Sigmoid colon (tissue), 7 donors: ENCODE measurements at regions of chr20 and their contacts with region 1.

Region 1: GRCh38 chr20:33460711-33461110 is 17.1 kb upstream of the SNTA1 start:
- DNase-seq: no peak
- H3K4me3 ChIP-seq: no peak overlapping the region
- H3K27ac ChIP-seq: no peak overlapping the region
- H3K4me1 ChIP-seq: peaks cover 0 to 2% (median 0%) of the 10 kb centered on the region in 4 donors
- H3K27me3 ChIP-seq: no peaks in the 10 kb centered on the region
- CTCF ChIP-seq: no peak
- EP300 ChIP-seq: no peak
- POLR2A ChIP-seq: no peak

Region 2: GRCh38 chr20:33031531-33031930 is 429.2 kb before region 1 on chr20 and contains the start of gene BPIFB6:
- intact Hi-C with region 1: no loop called
- DNase-seq: no peak
- H3K4me3 ChIP-seq: no peak within 1 kb of the TSS
- H3K27ac ChIP-seq: no peak within 1 kb of the TSS
- H3K4me1 ChIP-seq: no peaks in the 10 kb centered on the region
- H3K27me3 ChIP-seq: no peaks in the 10 kb centered on the region
- CTCF ChIP-seq: no peak
- EP300 ChIP-seq: no peak
- POLR2A ChIP-seq: no peak
- total RNA-seq, gene BPIFB6: not detected

Region 3: DNA sequence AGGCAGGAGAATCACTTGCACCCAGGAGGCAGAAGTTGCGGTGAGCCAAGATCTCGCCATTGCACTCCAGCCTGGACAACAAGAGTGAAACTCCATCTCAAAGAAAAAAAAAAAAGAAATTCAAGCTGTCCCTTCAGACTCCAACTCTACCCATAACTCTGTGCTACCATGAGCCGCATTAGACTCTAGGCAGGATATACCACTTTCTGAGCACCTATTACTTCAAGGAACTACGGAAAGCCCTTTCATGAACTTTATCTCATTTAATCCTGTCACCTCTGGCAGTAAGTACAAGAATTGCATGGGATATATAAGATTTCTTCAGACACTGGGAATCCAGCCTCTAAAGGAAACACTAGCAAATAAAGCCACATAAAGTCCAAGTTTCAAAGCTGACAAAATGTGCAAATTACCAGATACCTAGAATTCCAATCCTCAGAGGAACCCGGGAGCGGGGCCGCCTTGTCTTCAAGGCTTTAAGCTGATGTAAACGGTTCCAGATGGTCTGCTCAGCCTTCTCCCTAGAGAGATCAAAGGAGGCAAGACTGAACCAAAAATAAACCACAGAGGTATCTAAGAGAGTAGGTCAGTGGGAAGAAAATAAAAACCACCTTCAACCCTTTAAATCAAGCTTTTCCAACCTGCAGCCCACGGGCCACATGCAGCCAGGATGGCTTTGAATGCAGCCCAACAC is 68.8 kb before region 1 on chr20:
- intact Hi-C with region 1: no loop called
- DNase-seq: no peak
- H3K4me3 ChIP-seq: no peak overlapping the region
- H3K27ac ChIP-seq: no peak overlapping the region
- H3K4me1 ChIP-seq: no peaks in the 10 kb centered on the region
- H3K27me3 ChIP-seq: no peaks in the 10 kb centered on the region
- CTCF ChIP-seq: no peak
- EP300 ChIP-seq: no peak
- POLR2A ChIP-seq: no peak

Region 4: GRCh38 chr20:33539129-33539528 is 78.4 kb after region 1 on chr20:
- intact Hi-C with region 1: no loop called
- DNase-seq: no peak
- H3K4me3 ChIP-seq: no peak overlapping the region
- H3K27ac ChIP-seq: peak overlapping the region in 2 of 4 donors; percentile 0 to 78
- H3K4me1 ChIP-seq: peaks cover 0 to 45% (median 14%) of the 10 kb centered on the region in 4 donors
- H3K27me3 ChIP-seq: no peaks in the 10 kb centered on the region
- CTCF ChIP-seq: no peak
- EP300 ChIP-seq: no peak
- POLR2A ChIP-seq: no peak

Region 5: DNA sequence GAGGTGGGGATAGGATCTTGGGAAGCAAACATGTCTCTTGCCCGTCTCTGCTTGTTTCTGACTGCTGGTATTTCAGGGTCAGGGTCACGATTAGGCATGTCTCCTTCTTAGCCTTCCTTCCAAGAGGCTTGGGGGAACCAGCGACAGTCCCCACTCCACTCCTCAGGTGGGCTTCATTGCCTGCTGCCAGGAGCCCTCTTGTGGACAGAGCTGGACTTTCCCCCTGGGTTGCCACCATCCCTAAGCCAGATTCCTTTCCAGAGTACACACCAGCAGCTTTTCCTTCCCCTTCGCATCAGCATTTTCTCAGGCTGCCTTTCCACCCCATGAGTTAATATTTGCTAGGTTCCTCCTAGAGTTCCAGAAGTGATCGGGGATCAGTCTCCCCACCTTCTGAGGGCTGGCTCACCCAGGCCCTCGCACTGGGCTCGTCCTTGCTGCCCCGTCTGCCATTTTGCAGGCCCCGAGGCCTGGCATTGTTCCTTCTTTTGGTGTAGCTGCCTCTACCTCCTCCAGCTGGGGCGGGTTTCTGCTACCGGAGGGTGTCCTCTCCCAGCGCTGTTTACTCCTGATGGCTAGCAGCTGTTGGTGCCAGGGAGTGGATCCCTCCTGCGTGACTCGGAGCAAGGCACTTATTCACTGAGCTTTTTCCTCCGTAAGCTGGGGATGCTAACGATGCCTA is 192.6 kb after region 1 on chr20:
- intact Hi-C with region 1: loop called (anchors 1 kb)
- DNase-seq: peak; percentile 85
- H3K4me3 ChIP-seq: peak overlapping the region in 3 of 4 donors; percentile 13 to 32 (median 21)
- H3K27ac ChIP-seq: peak overlapping the region in 2 of 4 donors; percentile 30 to 49
- H3K4me1 ChIP-seq: peaks cover 0 to 28% (median 19%) of the 10 kb centered on the region in 4 donors
- H3K27me3 ChIP-seq: no peaks in the 10 kb centered on the region
- CTCF ChIP-seq: peak; percentile 79 to 90 (median 84)
- EP300 ChIP-seq: no peak
- POLR2A ChIP-seq: no peak